Activated CD4-positive, alpha-beta memory T cell treated with anti-CD3 and anti-CD28 coated beads for 36 hours (primary cell): ENCODE measurements at regions of chr16 and their contacts with region 1.

Region 1: GRCh38 chr16:75647492-75648264 is at the starts of genes KARS1 and TERF2IP:
- DNase-seq: peak; percentile 97
- H3K4me3 Mint-ChIP-seq: peak within 1 kb of the TSS; percentile 94
- H3K27ac Mint-ChIP-seq: peak within 1 kb of the TSS; percentile 98
- H3K4me1 Mint-ChIP-seq: peaks cover 54% of the 10 kb centered on the region
- H3K27me3 Mint-ChIP-seq: no peaks in the 10 kb centered on the region
- total RNA-seq, gene KARS1: 273 to 277 TPM
- total RNA-seq, gene TERF2IP: 80.3 to 85.1 TPM

Region 2: DNA sequence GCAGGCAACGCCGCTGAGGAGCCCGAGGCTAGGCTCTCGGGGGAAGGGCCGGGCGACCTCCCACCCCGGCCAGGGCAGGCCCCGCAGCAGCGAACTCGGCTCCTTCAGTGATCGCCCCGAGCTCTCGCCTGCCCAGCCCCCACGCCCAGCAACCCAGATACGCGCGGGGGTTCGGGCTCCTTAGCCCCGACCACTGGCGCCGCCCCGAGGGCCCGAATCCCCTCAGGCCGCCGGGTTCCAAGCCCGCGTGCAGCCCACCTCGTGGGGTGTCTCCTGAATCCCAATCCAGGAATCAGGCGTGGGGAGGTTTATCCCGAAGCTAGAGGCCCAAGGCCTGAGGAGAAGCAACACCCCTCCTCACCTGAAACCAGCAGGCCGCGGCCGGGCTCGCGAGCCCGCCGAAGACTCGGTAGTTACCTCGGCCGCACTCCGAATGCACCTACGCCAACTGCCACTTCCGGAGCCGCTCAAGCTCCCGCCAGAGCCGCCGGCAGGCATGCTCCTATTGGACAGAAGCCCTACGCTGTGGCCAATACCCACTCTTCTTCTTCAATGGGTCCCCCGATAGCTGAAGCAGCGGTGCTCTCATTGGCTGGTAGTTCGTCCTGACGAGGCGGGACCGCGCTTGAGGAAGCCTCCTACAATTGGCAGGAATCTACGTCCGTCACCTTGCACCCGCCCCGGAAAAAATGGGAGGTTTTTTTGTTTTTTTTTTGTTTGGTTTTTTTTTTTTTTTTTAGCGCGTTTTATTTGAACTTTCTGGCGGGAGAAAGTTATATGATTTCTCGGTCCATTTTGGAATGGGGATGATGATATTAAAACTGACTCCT is 981.0 kb before region 1 on chr16 and contains the start of gene RFWD3:
- CTCF ChIA-PET with region 1: no interaction called
- POLR2A ChIA-PET with region 1: no interaction called
- intact Hi-C with region 1: loop called (anchors 5 kb)
- DNase-seq: peak; percentile 98
- H3K4me3 Mint-ChIP-seq: peak within 1 kb of the TSS; percentile 85
- H3K27ac Mint-ChIP-seq: peak within 1 kb of the TSS; percentile 91
- H3K4me1 Mint-ChIP-seq: peaks cover 39% of the 10 kb centered on the region
- H3K27me3 Mint-ChIP-seq: no peaks in the 10 kb centered on the region
- total RNA-seq, gene RFWD3: 95.3 to 109 TPM

Region 3: GRCh38 chr16:75519881-75520280 is 127.8 kb before region 1 on chr16:
- CTCF ChIA-PET with region 1: interaction called, 7 read pairs
- POLR2A ChIA-PET with region 1: interaction called, 12 read pairs
- intact Hi-C with region 1: loop called (anchors 1 kb)
- DNase-seq: no peak
- H3K4me3 Mint-ChIP-seq: no peak overlapping the region
- H3K27ac Mint-ChIP-seq: no peak overlapping the region
- H3K4me1 Mint-ChIP-seq: peaks cover 10% of the 10 kb centered on the region
- H3K27me3 Mint-ChIP-seq: no peaks in the 10 kb centered on the region

Region 4: DNA sequence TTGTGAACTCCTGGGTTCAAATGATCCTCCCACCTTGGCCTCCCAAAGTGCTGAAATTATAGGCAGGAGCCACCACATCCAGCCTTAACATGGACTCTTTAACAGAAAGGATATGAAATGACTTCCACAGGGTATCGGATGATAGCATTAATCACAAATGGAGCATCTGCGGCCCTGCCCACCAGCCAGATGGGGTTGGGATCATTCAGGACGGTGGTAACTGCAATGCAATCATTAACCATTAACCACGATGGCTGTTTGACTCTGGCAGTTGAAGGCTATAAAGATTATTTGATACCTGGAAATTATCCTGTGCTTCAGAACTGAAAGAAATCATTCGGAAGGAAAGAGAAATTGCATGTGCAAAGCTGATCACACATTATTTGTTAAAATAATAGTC is 106.4 kb before region 1 on chr16:
- CTCF ChIA-PET with region 1: no interaction called
- POLR2A ChIA-PET with region 1: no interaction called
- intact Hi-C with region 1: no loop called
- DNase-seq: no peak
- H3K4me3 Mint-ChIP-seq: no peak overlapping the region
- H3K27ac Mint-ChIP-seq: no peak overlapping the region
- H3K4me1 Mint-ChIP-seq: peaks cover 2% of the 10 kb centered on the region
- H3K27me3 Mint-ChIP-seq: no peaks in the 10 kb centered on the region

Region 5: GRCh38 chr16:75566040-75566810 is 81.5 kb before region 1 on chr16 and contains the start of gene GABARAPL2:
- CTCF ChIA-PET with region 1: interaction called, 6 read pairs
- POLR2A ChIA-PET with region 1: interaction called, 6 read pairs
- intact Hi-C with region 1: loop called (anchors 1 kb)
- DNase-seq: peak; percentile 92
- H3K4me3 Mint-ChIP-seq: peak within 1 kb of the TSS; percentile 94
- H3K27ac Mint-ChIP-seq: peak within 1 kb of the TSS; percentile 85
- H3K4me1 Mint-ChIP-seq: peaks cover 40% of the 10 kb centered on the region
- H3K27me3 Mint-ChIP-seq: peaks cover 7% of the 10 kb centered on the region
- total RNA-seq, gene GABARAPL2: 71.5 to 76.1 TPM

Region 6: DNA sequence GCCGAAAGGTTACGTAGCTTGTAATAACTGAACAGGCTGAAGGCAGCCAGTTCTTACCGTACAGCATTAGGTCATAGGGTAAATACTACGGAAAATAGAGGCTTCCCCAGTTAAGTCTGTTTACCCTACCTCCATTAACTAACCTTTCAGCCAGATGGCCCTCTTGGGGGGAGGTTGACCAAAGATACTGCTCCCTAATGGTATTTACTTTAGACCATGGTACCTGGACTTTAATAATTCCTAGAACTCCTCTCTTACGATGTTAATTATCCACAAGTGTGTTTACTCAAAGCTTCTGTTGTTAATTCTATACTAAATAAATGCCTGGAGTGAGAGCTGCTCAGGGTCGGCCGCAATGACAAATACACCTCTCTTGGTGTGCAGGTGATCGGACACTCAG is 14.8 kb before region 1 on chr16:
- CTCF ChIA-PET with region 1: interaction called, 3 read pairs
- POLR2A ChIA-PET with region 1: interaction called, 11 read pairs
- intact Hi-C with region 1: no loop called
- DNase-seq: no peak
- H3K4me3 Mint-ChIP-seq: no peak overlapping the region
- H3K27ac Mint-ChIP-seq: no peak overlapping the region
- H3K4me1 Mint-ChIP-seq: peaks cover 22% of the 10 kb centered on the region
- H3K27me3 Mint-ChIP-seq: no peaks in the 10 kb centered on the region

Region 7: GRCh38 chr16:77190478-77191258 is 1543.0 kb after region 1 on chr16 and contains the start of gene MON1B:
- CTCF ChIA-PET with region 1: no interaction called
- POLR2A ChIA-PET with region 1: interaction called, 5 read pairs
- intact Hi-C with region 1: loop called (anchors 2 kb)
- DNase-seq: peak; percentile 96
- H3K4me3 Mint-ChIP-seq: peak within 1 kb of the TSS; percentile 86
- H3K27ac Mint-ChIP-seq: peak within 1 kb of the TSS; percentile 98
- H3K4me1 Mint-ChIP-seq: peaks cover 33% of the 10 kb centered on the region
- H3K27me3 Mint-ChIP-seq: no peaks in the 10 kb centered on the region
- total RNA-seq, gene MON1B: 63.7 to 70.2 TPM